ENCODE measurements at regions of chr19 and their contacts with region 1.

Region 1: DNA sequence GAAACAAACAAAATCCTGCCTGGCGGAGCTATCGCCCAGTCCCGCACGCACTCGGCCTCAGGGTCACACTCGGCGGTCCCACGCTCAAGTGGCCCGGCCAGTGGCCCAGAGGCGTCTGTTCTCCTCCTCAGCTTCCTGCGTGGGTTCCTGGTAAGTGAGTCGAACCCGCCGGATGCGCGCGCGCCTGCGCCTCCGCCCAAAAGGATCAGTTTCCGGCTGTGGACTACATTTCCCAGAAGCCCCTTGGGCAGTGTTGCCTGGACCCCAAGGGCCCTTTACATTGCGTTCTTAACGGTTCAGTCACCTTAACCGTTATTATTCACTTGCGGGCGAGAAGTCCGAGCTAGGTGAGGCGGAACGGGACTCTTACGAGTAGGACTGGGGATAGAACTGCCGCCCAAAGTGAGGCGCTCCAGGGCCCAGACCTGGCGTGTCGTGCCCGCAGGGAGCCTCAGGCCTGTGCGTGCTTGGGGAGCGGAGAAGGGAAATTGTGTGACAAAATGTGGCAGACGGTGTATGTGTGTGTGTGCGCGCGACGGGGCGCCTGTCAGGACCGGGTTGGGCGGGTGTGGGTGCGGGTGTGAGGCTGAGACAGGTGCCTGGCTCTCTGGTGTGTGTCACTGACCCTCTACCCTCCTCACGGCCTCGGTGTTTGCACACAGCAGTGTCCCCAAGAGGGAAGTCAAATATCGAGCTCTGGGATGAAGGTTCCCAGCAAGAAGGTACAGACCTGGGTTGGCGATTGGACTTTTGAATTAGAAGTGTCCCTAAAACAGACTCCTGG is at the start of gene ZNF546:
- DNase-seq: peak; percentile 95
- H3K4me3 Mint-ChIP-seq: peak within 1 kb of the TSS; percentile 98
- H3K27ac Mint-ChIP-seq: peak within 1 kb of the TSS; percentile 95
- H3K4me1 Mint-ChIP-seq: peaks cover 36% of the 10 kb centered on the region
- H3K27me3 Mint-ChIP-seq: no peaks in the 10 kb centered on the region
- total RNA-seq, gene ZNF546: 4.2 to 5.5 TPM

Region 2: GRCh38 chr19:39941615-39942365 is 55.2 kb before region 1 on chr19:
- CTCF ChIA-PET with region 1: no interaction called
- POLR2A ChIA-PET with region 1: interaction called, 3 read pairs
- intact Hi-C with region 1: loop called (anchors 2 kb)
- DNase-seq: peak; percentile 59
- H3K4me3 Mint-ChIP-seq: peak overlapping the region; percentile 43
- H3K27ac Mint-ChIP-seq: peak overlapping the region; percentile 70
- H3K4me1 Mint-ChIP-seq: peaks cover 69% of the 10 kb centered on the region
- H3K27me3 Mint-ChIP-seq: no peaks in the 10 kb centered on the region

Region 3: DNA sequence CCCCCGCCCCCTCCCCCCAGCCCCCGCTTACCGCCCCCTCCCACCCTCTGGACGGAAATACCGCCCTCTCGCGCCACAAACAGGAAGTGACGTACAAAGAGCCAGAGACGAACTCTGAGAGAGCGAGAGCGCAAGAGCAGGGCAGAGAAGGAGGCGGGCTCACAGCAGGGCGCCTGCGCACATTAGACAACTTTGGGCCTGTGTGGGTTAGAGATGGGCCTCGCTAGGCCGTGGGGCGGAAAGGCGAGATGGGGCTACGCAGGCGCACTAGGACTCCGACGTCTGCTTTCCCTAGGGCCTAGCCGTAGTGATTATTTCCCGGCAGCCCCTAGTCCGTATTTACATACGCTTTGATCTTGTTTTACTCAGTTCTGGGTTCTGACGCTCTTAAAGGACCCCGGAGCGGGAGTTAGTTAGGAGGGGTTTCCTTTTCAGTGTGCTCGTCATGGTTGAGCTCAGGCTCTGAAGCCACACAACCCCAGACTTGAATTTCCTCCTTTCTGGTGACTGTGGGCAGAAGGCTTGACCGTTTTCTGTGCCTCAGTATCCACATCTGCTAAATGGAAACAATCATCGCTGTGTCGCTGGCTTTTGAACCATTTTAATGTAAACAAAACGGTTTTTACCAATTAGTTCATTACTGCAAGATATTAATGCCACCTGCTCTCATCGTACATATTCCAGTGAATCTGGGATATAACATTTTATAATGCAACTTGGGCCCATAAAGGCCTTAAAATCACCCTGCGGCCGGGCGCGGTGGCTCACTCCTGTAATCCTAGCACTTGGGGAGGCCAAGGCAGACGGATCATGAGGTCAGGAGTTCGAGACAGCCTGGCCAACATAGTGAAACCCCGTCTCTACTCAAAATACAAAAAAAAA is 288.6 kb after region 1 on chr19:
- CTCF ChIA-PET with region 1: no interaction called
- POLR2A ChIA-PET with region 1: no interaction called
- intact Hi-C with region 1: loop called (anchors 10 kb)
- DNase-seq: peak; percentile 99
- H3K4me3 Mint-ChIP-seq: peak overlapping the region; percentile 87
- H3K27ac Mint-ChIP-seq: peak overlapping the region; percentile 99
- H3K4me1 Mint-ChIP-seq: peaks cover 43% of the 10 kb centered on the region
- H3K27me3 Mint-ChIP-seq: no peaks in the 10 kb centered on the region